Mammary epithelial cell (primary cell): ENCODE measurements at regions of chr1 and their contacts with region 1.

Region 1: GRCh38 chr1:153192697-153193096 is 10.5 kb upstream of the LELP1 start:
- DNase-seq: peak; percentile 48
- H3K4me3 ChIP-seq: no peak overlapping the region
- H3K27ac ChIP-seq: no peak overlapping the region
- H3K4me1 ChIP-seq: peaks cover 7% of the 10 kb centered on the region
- H3K27me3 ChIP-seq: no peaks in the 10 kb centered on the region
- CTCF ChIP-seq: peak; percentile 82 to 90

Region 2: DNA sequence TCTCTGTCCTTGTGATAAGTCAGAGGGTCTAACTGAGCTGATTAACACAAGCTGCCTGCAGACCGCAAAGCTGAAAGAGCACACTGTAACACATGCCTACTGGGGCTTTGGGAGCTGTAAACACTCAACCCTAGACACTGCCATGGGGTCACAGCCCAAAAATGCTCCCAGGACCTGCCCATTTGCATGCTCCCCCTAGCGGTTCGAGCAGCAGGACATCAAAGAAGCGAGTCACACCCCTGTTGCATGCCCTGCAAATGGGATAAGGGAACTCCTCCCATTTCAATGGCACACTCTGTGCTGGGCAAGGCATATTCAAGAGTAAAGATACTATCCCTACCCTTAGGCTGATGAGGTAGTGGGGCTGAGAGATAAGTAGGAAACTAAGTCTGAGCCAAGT is 648.9 kb before region 1 on chr1:
- CTCF ChIA-PET with region 1: no interaction called
- dilution Hi-C with region 1: no loop called
- in situ Hi-C with region 1: no loop called
- intact Hi-C with region 1: no loop called
- DNase-seq: no peak
- H3K4me3 ChIP-seq: no peak overlapping the region
- H3K27ac ChIP-seq: no peak overlapping the region
- H3K4me1 ChIP-seq: no peaks in the 10 kb centered on the region
- H3K27me3 ChIP-seq: no peaks in the 10 kb centered on the region
- CTCF ChIP-seq: peak; percentile 2 to 29

Region 3: DNA sequence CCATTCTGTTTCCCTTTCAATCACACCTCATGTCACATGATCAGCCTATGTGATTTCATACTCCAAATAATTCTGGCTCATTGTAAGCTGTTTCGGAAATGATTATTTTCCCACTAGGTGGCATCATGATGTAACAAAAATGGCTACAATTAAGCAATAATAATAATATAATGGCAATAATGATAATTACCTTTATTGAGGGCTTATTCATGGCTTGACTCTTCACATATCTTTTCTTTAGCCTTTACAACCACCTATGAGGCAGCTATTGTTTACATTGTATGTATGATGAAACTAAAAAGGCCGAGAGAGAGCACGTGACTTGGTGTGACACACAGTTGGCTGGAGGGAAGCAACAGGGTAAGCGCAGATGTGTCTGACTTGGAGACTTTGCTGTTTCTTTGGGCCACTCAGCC is 447.4 kb before region 1 on chr1:
- CTCF ChIA-PET with region 1: no interaction called
- dilution Hi-C with region 1: no loop called
- in situ Hi-C with region 1: no loop called
- intact Hi-C with region 1: loop called (anchors 5 kb)
- DNase-seq: peak; percentile 44
- H3K4me3 ChIP-seq: no peak overlapping the region
- H3K27ac ChIP-seq: no peak overlapping the region
- H3K4me1 ChIP-seq: peaks cover 58% of the 10 kb centered on the region
- H3K27me3 ChIP-seq: no peaks in the 10 kb centered on the region
- CTCF ChIP-seq: peak; percentile 14 to 35

Region 4: GRCh38 chr1:152926091-152926490 is 266.6 kb before region 1 on chr1:
- CTCF ChIA-PET with region 1: interaction called, 11 read pairs
- dilution Hi-C with region 1: no loop called
- in situ Hi-C with region 1: loop called in 1 of 2 experiments (anchors 10 kb)
- intact Hi-C with region 1: loop called (anchors 1 kb)
- DNase-seq: peak; percentile 64
- H3K4me3 ChIP-seq: no peak overlapping the region
- H3K27ac ChIP-seq: no peak overlapping the region
- H3K4me1 ChIP-seq: peaks cover 12% of the 10 kb centered on the region
- H3K27me3 ChIP-seq: no peaks in the 10 kb centered on the region
- CTCF ChIP-seq: peak; percentile 84 to 89

Region 5: GRCh38 chr1:153040950-153041631 is 151.6 kb before region 1 on chr1 and contains the start of gene SPRR2D:
- CTCF ChIA-PET with region 1: no interaction called
- dilution Hi-C with region 1: loop called (anchors 5 kb)
- in situ Hi-C with region 1: no loop called
- intact Hi-C with region 1: no loop called
- DNase-seq: peak; percentile 54
- H3K4me3 ChIP-seq: no peak within 1 kb of the TSS
- H3K27ac ChIP-seq: no peak within 1 kb of the TSS
- H3K4me1 ChIP-seq: peaks cover 4% of the 10 kb centered on the region
- H3K27me3 ChIP-seq: no peaks in the 10 kb centered on the region
- CTCF ChIP-seq: no peak
- total RNA-seq, gene SPRR2D: 13.8 TPM in 1 of 2 donors, not detected in the other

Region 6: GRCh38 chr1:153288634-153289275 is 96.1 kb after region 1 on chr1:
- CTCF ChIA-PET with region 1: interaction called, 5 read pairs
- dilution Hi-C with region 1: loop called (anchors 5 kb)
- in situ Hi-C with region 1: no loop called
- intact Hi-C with region 1: loop called (anchors 1 kb)
- DNase-seq: peak; percentile 83
- H3K4me3 ChIP-seq: no peak overlapping the region
- H3K27ac ChIP-seq: no peak overlapping the region
- H3K4me1 ChIP-seq: peaks cover 34% of the 10 kb centered on the region
- H3K27me3 ChIP-seq: no peaks in the 10 kb centered on the region
- CTCF ChIP-seq: peak; percentile 75 to 89